ENCODE measurements at regions of chr9 and their contacts with region 1.

Region 1: GRCh38 chr9:6667633-6668280 is 22.2 kb upstream of the GLDC start:
- ATAC-seq: peak; percentile 45 to 80 (median 60)
- H3K4me3 ChIP-seq: no peak overlapping the region
- H3K27ac ChIP-seq: no peak overlapping the region
- H3K4me1 ChIP-seq: no peaks in the 10 kb centered on the region

Region 2: DNA sequence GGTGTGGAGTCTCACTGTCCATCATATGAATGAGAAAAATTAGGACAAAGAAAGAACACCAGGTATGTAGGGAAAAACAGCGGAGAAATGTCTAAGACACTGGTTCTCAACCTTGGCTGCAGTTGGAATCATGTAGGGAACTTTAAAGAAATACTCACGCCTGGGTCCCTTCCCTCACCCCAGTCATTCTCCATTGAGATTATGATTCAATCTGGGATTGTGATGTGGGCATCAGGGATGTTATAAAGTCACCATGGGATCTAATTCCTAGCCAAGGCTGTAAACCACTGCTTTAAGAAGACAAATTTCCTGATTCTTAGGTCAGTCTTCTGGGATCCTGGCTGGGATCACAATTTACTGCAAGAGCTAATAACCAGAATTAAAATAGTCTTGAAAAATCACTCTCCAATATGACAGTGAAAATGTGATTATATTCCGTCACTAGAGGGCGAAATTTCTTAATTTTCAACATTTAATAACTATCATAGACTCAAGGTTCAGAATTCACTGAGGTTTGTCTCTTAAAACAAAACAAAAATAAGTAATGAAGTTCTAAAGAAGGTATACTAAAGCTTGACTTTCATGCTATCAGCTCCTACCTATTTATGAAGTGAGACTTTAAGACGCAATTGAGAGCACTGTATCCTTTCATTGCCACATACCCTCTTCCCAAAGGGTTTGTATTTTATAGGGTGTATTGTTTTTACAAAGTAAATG is 82.7 kb before region 1 on chr9:
- in situ Hi-C with region 1: loop called in 1 of 9 experiments (anchors 10 kb)
- ATAC-seq: peak in 3 of 8 experiments; percentile 58 to 68 (median 61)
- H3K4me3 ChIP-seq: no peak overlapping the region
- H3K27ac ChIP-seq: no peak overlapping the region
- H3K4me1 ChIP-seq: no peaks in the 10 kb centered on the region